Heart right ventricle (tissue), 16 donors: ENCODE measurements at regions of chr1 and their contacts with region 1.

Region 1: GRCh38 chr1:42319128-42319851 is 15.7 kb downstream of the FOXJ3 start:
- DNase-seq: no peak
- ATAC-seq: no peak
- H3K4me3 ChIP-seq: no peak overlapping the region
- H3K27ac ChIP-seq: peak overlapping the region; percentile 39 to 81 (median 70)
- H3K4me1 ChIP-seq: peaks cover 0 to 98% (median 77%) of the 10 kb centered on the region in 9 donors
- H3K27me3 ChIP-seq: no peaks in the 10 kb centered on the region
- CTCF ChIP-seq: no peak

Region 2: GRCh38 chr1:42266253-42267135 is 52.8 kb before region 1 on chr1:
- intact Hi-C with region 1: loop called in 1 of 10 experiments (anchors 5 kb)
- DNase-seq: no peak
- ATAC-seq: no peak
- H3K4me3 ChIP-seq: no peak overlapping the region
- H3K27ac ChIP-seq: no peak overlapping the region
- H3K4me1 ChIP-seq: peaks cover 0 to 41% (median 10%) of the 10 kb centered on the region in 9 donors
- H3K27me3 ChIP-seq: no peaks in the 10 kb centered on the region
- CTCF ChIP-seq: no peak